GM18951 (cell line): ENCODE measurements at regions of chr10 and their contacts with region 1.

Region 1: DNA sequence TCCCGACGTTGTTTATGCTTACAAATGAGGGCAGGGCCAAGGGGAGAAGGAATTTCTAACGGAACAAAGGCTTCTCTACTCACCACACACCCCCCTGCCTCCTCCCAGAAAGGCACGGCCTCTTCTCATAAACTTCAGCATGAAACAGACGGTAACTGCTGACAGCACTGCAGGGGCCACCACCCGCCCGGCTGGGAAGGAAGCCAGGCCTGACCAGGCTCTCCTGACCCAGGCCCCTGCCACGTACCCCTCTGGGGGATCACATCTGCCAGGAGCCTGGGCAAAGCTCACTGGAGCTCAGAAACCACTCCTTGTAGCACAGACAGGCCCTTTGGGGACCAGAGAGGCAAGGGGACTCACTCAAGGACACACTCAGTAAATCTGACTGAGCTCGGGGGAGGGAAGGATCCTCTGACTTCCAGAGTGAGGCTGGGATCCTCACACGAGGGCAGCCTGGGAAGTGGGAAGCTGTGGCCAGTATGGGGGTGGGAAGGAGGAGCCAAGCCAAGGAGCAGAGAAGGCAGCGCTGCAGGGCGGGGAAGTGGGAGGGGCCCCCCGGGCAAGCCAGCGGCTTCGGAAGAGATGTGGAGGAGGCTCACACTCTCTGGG is 46.1 kb downstream of the ZCCHC24 start:
- POLR2A ChIP-seq: no peak

Region 2: GRCh38 chr10:79463578-79464496 is 64.5 kb after region 1 on chr10:
- in situ Hi-C with region 1: loop called (anchors 10 kb)
- POLR2A ChIP-seq: no peak